ENCODE measurements at regions of chr11 and their contacts with region 1.

Region 1: DNA sequence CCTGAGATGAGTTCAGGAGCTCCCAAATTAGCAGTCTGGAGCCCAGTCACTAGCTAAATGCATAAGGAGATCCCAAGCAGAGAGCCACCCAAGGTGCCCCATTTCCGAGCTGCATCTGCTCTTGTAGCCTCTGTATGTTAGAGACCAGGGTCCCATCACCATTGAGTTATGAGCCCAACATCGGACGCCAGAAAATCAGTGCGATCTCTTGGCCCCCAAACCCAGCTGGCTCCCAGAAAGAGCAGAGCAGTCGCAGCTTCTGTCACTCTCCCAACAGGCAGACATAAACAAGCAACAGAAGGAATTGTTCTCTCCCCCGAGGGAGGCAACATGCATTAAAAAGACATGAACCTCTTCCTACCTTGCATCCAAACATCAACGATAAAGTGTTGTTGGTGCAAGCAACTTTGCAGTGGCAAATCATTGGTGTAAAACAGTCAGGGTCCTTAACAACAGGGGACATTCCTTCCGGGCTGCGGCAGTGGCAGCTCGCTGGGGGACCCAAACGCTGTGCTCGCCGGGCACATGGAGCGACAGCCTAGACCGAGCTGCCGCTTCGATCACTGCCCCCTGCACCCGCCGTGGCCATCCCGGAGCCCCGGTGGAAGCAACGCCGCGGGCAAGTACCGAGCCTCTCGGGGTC is 907.1 kb downstream of the DLG2 start:
- DNase-seq: peak; percentile 30
- ATAC-seq: peak; percentile 67

Region 2: GRCh38 chr11:84558085-84558905 is 161.8 kb before region 1 on chr11:
- intact Hi-C with region 1: loop called (anchors 5 kb)
- DNase-seq: no peak
- ATAC-seq: peak; percentile 60

Region 3: DNA sequence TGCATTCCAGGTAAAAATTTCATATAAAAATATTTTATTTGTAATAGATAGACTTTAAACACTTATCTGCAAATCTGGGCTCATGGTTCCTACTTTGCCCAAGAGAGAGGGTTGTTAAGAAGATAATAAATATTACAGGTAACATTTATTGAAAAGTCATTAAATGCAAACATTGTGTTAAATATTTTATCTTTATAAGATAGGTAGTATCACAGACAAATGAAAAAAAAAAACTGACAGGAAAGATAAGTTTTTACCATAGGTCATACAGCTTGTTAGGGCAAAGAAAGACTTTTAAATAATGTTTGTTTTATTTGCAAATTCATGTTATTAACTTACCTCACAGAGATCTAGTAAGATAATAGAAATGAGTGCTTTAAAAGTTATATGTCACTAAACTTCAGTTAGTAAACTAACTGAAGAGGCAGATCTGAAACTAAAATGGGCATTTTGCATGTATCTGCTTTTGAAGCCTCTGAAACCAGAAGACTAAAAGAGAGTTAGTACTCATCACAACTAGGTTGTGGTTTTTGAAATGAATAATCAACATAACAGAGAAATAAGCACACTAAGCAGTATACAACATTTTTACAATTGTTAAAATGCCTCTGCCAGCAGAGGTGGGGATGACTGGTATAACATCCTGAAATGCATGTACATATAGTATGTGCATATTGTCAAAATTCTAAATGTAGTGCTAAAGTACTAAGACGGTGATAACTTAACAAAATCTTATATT is 342.4 kb after region 1 on chr11:
- intact Hi-C with region 1: no loop called
- DNase-seq: no peak
- ATAC-seq: no peak

Measured in left ventricle myocardium superior (tissue), 1 donor.